ENCODE measurements at regions of chr2 and their contacts with region 1.

Region 1: GRCh38 chr2:19140596-19141219 is 217.7 kb downstream of the OSR1 start:
- DNase-seq: peak; percentile 91 to 92
- H3K4me3 ChIP-seq: no peak overlapping the region
- H3K4me3 Mint-ChIP-seq: peak overlapping the region; percentile 21
- H3K27ac Mint-ChIP-seq: peak overlapping the region; percentile 79
- H3K4me1 ChIP-seq: peaks cover 27% of the 10 kb centered on the region
- H3K4me1 Mint-ChIP-seq: peaks cover 22% of the 10 kb centered on the region
- H3K27me3 ChIP-seq: no peaks in the 10 kb centered on the region
- H3K27me3 Mint-ChIP-seq: no peaks in the 10 kb centered on the region
- CTCF ChIP-seq: no peak

Region 2: GRCh38 chr2:18824261-18824790 is 316.4 kb before region 1 on chr2:
- CTCF ChIA-PET with region 1: no interaction called
- POLR2A ChIA-PET with region 1: no interaction called
- intact Hi-C with region 1: loop called (anchors 1 kb)
- DNase-seq: peak; percentile 69 to 76
- H3K4me3 ChIP-seq: no peak overlapping the region
- H3K4me3 Mint-ChIP-seq: no peak overlapping the region
- H3K27ac Mint-ChIP-seq: no peak overlapping the region
- H3K4me1 ChIP-seq: peaks cover 39% of the 10 kb centered on the region
- H3K4me1 Mint-ChIP-seq: peaks cover 25% of the 10 kb centered on the region
- H3K27me3 ChIP-seq: no peaks in the 10 kb centered on the region
- H3K27me3 Mint-ChIP-seq: no peaks in the 10 kb centered on the region
- CTCF ChIP-seq: no peak

Region 3: GRCh38 chr2:19114754-19115231 is 25.9 kb before region 1 on chr2:
- CTCF ChIA-PET with region 1: no interaction called
- POLR2A ChIA-PET with region 1: no interaction called
- intact Hi-C with region 1: loop called (anchors 2 kb)
- DNase-seq: no peak
- H3K4me3 ChIP-seq: no peak overlapping the region
- H3K4me3 Mint-ChIP-seq: no peak overlapping the region
- H3K27ac Mint-ChIP-seq: no peak overlapping the region
- H3K4me1 ChIP-seq: no peaks in the 10 kb centered on the region
- H3K4me1 Mint-ChIP-seq: no peaks in the 10 kb centered on the region
- H3K27me3 ChIP-seq: no peaks in the 10 kb centered on the region
- H3K27me3 Mint-ChIP-seq: no peaks in the 10 kb centered on the region
- CTCF ChIP-seq: no peak

Region 4: GRCh38 chr2:19232312-19232711 is 91.6 kb after region 1 on chr2:
- CTCF ChIA-PET with region 1: no interaction called
- POLR2A ChIA-PET with region 1: no interaction called
- intact Hi-C with region 1: loop called (anchors 2 kb)
- DNase-seq: peak; percentile 43 to 50
- H3K4me3 ChIP-seq: no peak overlapping the region
- H3K4me3 Mint-ChIP-seq: no peak overlapping the region
- H3K27ac Mint-ChIP-seq: no peak overlapping the region
- H3K4me1 ChIP-seq: peaks cover 8% of the 10 kb centered on the region
- H3K4me1 Mint-ChIP-seq: no peaks in the 10 kb centered on the region
- H3K27me3 ChIP-seq: no peaks in the 10 kb centered on the region
- H3K27me3 Mint-ChIP-seq: no peaks in the 10 kb centered on the region
- CTCF ChIP-seq: no peak

Measured in Caco-2 (cell line).